ENCODE measurements at regions of chr2 and their contacts with region 1.

Region 1: GRCh38 chr2:227238238-227239237 is 74.1 kb downstream of the COL4A3 start:
- DNase-seq: peak; percentile 56
- H3K4me3 ChIP-seq: no peak overlapping the region
- H3K27ac ChIP-seq: no peak overlapping the region
- H3K4me1 ChIP-seq: no peaks in the 10 kb centered on the region
- CTCF ChIP-seq: peak; percentile 99

Region 2: DNA sequence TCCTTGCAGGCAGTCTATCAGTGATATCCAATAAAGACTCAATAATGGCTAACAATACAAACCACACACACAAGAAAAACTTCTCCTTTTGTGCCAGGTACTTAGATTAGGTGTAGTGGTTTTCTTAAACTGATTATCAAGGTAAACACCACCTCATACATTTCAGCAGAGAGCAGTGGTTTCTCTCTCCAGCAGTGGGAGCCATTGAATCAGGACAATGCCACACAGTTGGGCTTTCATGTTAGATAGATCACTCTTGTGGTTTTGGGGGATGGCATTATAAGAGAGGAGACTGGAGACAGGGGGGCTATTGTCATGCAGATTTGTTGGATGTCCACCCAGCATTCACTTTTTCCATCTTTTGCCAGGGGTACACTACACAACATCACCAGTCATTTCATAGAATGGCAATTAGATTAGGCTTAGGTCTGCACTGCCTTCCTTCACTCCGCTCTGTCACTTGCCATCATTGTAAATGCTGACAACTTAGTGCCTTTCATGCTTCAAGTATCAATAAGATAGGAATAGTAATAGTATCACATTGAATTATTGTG is 425.3 kb before region 1 on chr2:
- CTCF ChIA-PET with region 1: no interaction called
- POLR2A ChIA-PET with region 1: no interaction called
- intact Hi-C with region 1: loop called (anchors 10 kb)
- DNase-seq: peak; percentile 60
- H3K4me3 ChIP-seq: no peak overlapping the region
- H3K27ac ChIP-seq: no peak overlapping the region
- H3K4me1 ChIP-seq: no peaks in the 10 kb centered on the region
- CTCF ChIP-seq: peak; percentile 91

Region 3: DNA sequence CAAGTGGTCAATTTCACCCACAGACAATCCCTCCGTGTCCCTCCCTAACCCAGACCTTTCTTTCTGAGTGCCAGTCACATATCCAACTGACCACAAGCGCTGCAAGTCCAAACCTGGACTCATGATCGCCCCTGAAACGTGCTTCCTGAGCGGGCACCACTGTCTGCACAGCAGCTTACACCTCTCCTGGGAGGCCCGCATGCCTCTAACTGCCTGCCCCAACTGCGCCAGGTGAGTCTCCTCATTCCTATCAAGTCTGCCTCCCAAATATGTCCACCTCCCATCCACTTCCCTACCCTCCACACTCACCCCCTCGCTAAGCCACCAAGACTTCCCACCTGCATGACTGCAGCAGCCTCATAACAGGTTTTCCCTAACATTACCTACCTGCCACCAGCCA is 107.9 kb before region 1 on chr2:
- CTCF ChIA-PET with region 1: interaction called, 3 read pairs
- POLR2A ChIA-PET with region 1: interaction called, 4 read pairs
- intact Hi-C with region 1: loop called (anchors 1 kb)
- DNase-seq: no peak
- H3K4me3 ChIP-seq: no peak overlapping the region
- H3K27ac ChIP-seq: no peak overlapping the region
- H3K4me1 ChIP-seq: no peaks in the 10 kb centered on the region
- CTCF ChIP-seq: no peak

Measured in OCI-LY7 (cell line).